Adrenal gland (tissue), 19 donors: ENCODE measurements at regions of chr11 and their contacts with region 1.

Region 1: GRCh38 chr11:65888163-65888814 is at the start of gene FIBP:
- DNase-seq: peak; percentile 98 to 99 (median 98)
- H3K4me3 ChIP-seq: peak within 1 kb of the TSS; percentile 27 to 66 (median 42)
- H3K27ac ChIP-seq: peak within 1 kb of the TSS; percentile 26 to 99 (median 96)
- H3K4me1 ChIP-seq: peaks cover 47 to 48% of the 10 kb centered on the region in 2 donors
- H3K27me3 ChIP-seq: no peaks in the 10 kb centered on the region
- CTCF ChIP-seq: peak; percentile 70 to 94 (median 86)
- POLR2A ChIP-seq: peak; percentile 68 to 90
- total RNA-seq, gene FIBP: 57.9 to 183 (median 72.4) TPM

Region 2: DNA sequence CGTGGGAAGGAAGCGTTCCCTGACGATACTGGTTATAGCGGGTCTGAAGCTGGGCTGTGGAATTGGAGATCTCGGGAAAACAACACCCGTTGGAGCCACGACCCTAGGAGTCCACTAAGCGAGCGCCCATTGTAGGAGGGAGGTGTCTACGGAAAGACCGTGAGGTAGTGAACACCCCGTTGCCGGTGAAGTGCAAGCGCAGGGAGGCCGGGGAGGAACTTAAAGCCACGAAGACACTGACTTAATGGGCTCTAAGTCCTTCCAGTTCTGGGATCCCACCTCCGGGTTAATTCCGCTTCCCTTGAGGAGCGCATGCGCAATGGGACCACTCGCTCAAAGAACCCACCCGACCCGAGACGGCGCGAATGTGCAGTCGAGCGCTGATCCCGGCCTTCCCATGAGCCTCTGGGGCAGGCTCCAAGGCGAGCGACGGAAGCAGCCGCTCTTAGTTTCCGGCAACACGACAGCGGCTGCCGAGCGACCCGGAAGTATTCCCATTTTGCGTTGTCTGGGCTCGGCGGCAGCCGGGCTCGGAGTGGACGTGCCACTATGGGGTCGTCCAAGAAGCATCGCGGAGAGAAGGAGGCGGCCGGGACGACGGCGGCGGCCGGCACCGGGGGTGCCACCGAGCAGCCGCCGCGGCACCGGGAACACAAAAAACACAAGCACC is 73.1 kb after region 1 on chr11 and contains the start of gene SART1:
- intact Hi-C with region 1: loop called (anchors 5 kb)
- DNase-seq: peak; percentile 95 to 99 (median 97)
- H3K4me3 ChIP-seq: peak within 1 kb of the TSS; percentile 91 to 100 (median 93)
- H3K27ac ChIP-seq: peak within 1 kb of the TSS; percentile 57 to 88 (median 82)
- H3K4me1 ChIP-seq: peaks cover 16 to 21% of the 10 kb centered on the region in 2 donors
- H3K27me3 ChIP-seq: no peaks in the 10 kb centered on the region
- CTCF ChIP-seq: no peak
- POLR2A ChIP-seq: peak; percentile 54 to 68
- total RNA-seq, gene SART1: 16.9 to 47.4 (median 31.2) TPM

Region 3: GRCh38 chr11:65981972-65982823 is 93.9 kb after region 1 on chr11:
- intact Hi-C with region 1: loop called in 1 of 2 experiments (anchors 5 kb)
- DNase-seq: no peak
- H3K4me3 ChIP-seq: no peak overlapping the region
- H3K27ac ChIP-seq: no peak overlapping the region
- H3K4me1 ChIP-seq: no peaks in the 10 kb centered on the region
- H3K27me3 ChIP-seq: no peaks in the 10 kb centered on the region
- CTCF ChIP-seq: no peak
- POLR2A ChIP-seq: no peak

Region 4: DNA sequence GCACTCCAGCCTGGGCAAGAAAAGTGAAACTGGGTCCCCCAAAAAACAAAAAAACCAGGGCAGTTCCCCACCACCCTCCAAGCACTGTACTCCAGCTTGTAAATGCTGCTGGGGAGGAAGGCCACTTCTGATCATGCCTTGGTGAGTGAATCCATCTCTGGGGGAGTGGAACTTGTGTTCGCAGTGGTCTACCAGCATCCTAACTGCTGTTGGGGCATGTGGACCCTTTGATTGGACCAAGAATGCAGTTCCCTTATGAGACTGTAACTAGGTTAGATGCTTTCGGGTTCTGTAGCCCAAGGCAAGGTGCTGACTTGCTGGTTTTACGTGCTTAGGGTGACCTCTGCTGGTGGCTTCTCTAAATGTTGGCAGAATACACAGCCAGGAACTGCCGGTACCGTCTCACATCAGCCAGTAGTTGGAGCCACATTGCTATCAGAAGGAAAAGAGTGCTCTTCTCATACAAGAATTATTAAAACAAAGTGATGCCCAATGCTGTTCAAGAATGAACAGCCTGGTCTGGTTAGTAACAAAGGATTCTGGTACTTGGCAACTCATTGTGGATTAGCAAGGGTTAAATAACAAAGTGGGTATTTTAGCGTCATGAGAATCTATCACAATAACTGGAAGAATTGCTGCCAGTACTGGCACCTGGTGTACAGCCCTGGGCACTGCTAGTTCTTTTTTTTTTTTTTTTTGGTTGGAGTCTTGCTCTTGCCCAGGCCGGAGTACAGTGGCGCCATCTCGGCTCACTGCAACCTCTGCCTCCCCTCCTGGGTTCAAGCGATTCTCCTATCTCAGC is 100.7 kb after region 1 on chr11:
- intact Hi-C with region 1: loop called (anchors 2 to 5 kb)
- DNase-seq: peak; percentile 88 to 98 (median 93)
- H3K4me3 ChIP-seq: no peak overlapping the region
- H3K27ac ChIP-seq: no peak overlapping the region
- H3K4me1 ChIP-seq: no peaks in the 10 kb centered on the region
- H3K27me3 ChIP-seq: no peaks in the 10 kb centered on the region
- CTCF ChIP-seq: peak; percentile 90 to 100 (median 99)
- POLR2A ChIP-seq: no peak